Activated CD4-positive, alpha-beta T cell treated with anti-CD3 and anti-CD28 coated beads, Interleukin-2, amount 10 ng/mL, durations not matched to agents 7 days and 5 days (primary cell): ENCODE measurements at regions of chr17 and their contacts with region 1.

Region 1: DNA sequence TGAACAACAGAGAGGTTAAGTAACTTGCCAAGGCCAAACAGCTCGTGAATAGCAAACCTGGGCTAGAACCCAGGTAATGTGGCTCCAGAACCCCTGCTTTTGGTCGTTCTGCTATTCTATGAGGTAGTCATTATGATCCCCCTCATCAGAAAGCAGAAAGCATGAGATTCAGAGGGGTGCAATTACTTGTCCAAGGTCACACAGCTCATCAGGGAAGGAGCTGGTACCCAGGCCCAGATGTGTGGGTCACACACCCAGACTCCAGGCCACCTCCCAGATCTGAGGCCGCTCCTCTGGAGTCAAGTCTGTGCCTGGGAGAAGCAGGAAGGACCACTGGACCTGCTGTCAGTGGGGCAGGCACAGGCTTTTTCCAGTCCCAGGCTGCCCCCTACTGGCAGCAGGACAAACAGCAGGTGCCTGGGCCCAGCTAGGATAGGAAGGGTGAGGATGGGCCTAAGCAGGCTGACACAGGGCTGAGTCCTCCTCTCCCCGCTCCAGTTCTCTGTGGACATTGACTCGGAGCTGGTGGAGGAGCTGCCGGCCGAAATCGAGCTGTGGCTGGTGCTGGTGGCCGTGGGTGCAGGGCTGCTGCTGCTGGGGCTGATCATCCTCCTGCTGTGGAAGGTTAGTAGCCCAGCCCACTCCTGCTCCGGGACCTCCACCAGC is 7.8 kb upstream of the PDK2 start:
- DNase-seq: peak; percentile 78
- H3K4me3 Mint-ChIP-seq: no peak overlapping the region
- H3K27ac Mint-ChIP-seq: no peak overlapping the region
- H3K4me1 Mint-ChIP-seq: no peaks in the 10 kb centered on the region
- H3K27me3 Mint-ChIP-seq: no peaks in the 10 kb centered on the region

Region 2: GRCh38 chr17:50026901-50027630 is 60.3 kb before region 1 on chr17:
- CTCF ChIA-PET with region 1: interaction called, 55 read pairs
- POLR2A ChIA-PET with region 1: no interaction called
- DNase-seq: peak; percentile 74
- H3K4me3 Mint-ChIP-seq: no peak overlapping the region
- H3K27ac Mint-ChIP-seq: no peak overlapping the region
- H3K4me1 Mint-ChIP-seq: peaks cover 20% of the 10 kb centered on the region
- H3K27me3 Mint-ChIP-seq: peaks cover 17% of the 10 kb centered on the region